ENCODE measurements at regions of chr16 and their contacts with region 1.

Region 1: GRCh38 chr16:1407753-1408152 is 6.8 kb downstream of the UNKL start:
- DNase-seq: no peak
- H3K4me3 ChIP-seq: peak overlapping the region; percentile 50 to 52
- H3K27ac ChIP-seq: peak overlapping the region; percentile 47 to 81
- H3K4me1 ChIP-seq: peaks cover 0 to 32% (median 20%) of the 10 kb centered on the region in 4 donors
- H3K27me3 ChIP-seq: no peaks in the 10 kb centered on the region
- CTCF ChIP-seq: no peak

Region 2: DNA sequence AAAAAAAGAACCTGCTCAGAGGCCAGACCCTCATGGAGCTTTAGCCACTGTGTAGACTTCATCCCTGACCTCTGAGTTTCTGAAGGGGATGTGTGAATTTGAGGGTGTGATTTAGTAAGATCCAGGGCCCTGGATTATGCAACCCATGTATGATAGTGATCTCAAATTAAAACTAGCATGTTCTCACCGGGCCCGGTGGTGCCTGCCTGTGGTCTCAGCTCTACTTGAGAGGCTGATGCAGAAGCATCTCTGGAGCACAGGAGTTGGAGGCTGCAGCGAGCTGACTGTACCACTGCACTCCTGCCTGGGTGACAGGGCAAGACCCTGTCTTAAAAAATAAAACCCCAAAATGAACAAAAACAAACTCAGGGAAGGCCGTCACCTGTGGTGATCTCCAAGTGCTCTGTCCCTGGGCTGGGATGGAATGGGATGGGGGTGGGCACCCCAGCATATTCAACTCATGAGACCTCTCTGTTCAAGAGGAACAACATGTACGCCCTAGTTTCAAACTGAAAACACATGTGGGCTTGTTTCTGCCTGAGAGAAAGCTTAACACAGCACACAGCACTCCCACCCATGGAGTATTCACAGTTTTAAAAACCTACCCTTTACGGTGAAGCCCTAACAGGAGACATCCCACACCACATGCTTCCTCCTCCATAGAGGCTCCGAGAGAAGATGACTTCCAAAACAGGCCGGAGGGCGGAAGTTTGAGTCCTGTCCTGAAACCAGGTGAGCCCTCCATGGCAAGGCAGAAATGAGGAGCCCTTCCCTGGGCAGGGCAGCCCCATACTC is 25.9 kb before region 1 on chr16:
- intact Hi-C with region 1: loop called (anchors 2 kb)
- DNase-seq: no peak
- H3K4me3 ChIP-seq: no peak overlapping the region
- H3K27ac ChIP-seq: no peak overlapping the region
- H3K4me1 ChIP-seq: peaks cover 8 to 28% (median 21%) of the 10 kb centered on the region in 4 donors
- H3K27me3 ChIP-seq: no peaks in the 10 kb centered on the region
- CTCF ChIP-seq: no peak

Region 3: DNA sequence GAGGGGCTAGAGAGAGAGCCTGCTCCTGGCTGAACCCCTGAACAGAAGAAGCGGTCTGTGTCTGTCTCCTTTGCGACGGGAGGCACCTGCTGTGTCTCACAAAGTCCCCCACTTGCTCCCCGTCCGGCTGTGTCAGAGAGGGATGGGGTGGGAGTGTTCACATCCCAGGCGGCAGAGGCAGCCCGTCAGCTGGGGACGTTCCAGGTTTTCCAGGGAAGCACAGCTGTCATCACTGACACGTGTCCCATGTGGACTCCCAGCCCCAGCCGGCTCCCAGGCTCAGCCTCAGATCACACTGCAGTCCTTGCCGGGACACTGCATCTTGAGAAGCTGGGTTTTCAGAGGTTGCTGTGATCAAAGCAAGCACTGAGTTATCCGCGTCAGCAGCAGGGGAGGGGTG is 87.0 kb after region 1 on chr16:
- intact Hi-C with region 1: no loop called
- DNase-seq: no peak
- H3K4me3 ChIP-seq: peak overlapping the region; percentile 79 to 81
- H3K27ac ChIP-seq: peak overlapping the region in 1 of 2 donors; percentile 6
- H3K4me1 ChIP-seq: peaks cover 0 to 31% (median 17%) of the 10 kb centered on the region in 4 donors
- H3K27me3 ChIP-seq: no peaks in the 10 kb centered on the region
- CTCF ChIP-seq: no peak

Measured in tibial artery (tissue), 4 donors.